Right ventricle myocardium inferior (tissue), 1 donor: ENCODE measurements at regions of chr22 and their contacts with region 1.

Region 1: GRCh38 chr22:26756675-26757293 is 99.4 kb downstream of the MIAT start:
- DNase-seq: peak; percentile 78
- ATAC-seq: peak; percentile 83

Region 2: GRCh38 chr22:26860301-26860700 is 103.5 kb after region 1 on chr22:
- intact Hi-C with region 1: no loop called
- DNase-seq: no peak
- ATAC-seq: no peak

Region 3: DNA sequence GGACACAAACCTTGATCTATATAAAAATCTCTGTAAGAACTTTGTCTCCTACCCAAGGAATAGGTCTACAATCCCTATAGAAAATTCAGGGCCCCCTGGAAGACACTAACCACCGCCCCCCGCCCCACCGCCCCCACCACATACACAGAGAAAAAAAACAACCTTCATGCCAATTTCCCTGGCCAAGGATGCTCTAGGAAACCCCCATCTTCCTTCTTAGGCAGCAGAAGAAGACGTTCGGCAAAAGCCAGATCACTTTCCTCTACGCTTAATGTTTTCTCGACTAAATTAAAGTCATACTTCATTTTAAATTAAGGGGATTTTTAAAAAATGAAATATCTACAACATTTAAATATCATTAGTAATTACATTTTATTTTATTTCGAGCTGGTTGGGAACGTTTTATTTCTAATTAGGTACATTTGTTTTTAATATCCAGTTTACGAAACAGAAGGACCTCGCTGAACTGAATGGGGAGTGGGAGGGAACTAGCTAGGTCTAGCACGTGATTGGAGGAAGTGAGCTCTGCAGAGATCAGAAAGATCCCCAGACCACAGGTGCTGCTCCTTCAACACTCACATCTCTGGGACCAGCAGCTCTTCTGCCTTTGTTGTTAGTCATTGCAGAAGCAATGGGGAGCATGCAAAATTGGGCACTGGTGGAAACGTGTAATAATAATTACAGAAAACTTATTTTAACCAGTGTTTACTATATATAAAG is 572.5 kb after region 1 on chr22:
- intact Hi-C with region 1: loop called (anchors 5 kb)
- DNase-seq: no peak
- ATAC-seq: no peak

Region 4: DNA sequence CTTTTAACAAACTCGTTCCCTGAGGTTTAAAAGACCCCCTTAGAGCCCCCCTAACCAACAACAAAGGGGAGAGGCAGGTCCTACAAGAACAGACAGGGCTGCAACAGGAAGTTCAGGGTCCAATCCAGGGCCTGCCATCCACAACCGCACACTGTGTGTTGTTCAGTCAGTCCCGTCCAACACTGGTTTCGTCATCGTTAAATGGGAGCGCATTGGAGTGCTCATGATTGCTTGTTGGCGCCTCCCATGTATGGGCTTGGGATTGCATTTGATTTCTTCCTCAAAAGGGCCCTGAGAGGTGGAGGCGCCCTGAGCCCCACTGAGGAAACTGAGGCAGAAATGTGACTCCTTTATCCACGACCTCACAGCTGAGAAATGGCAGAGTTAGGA is 870.7 kb after region 1 on chr22:
- intact Hi-C with region 1: loop called (anchors 10 kb)
- DNase-seq: no peak
- ATAC-seq: no peak

Region 5: DNA sequence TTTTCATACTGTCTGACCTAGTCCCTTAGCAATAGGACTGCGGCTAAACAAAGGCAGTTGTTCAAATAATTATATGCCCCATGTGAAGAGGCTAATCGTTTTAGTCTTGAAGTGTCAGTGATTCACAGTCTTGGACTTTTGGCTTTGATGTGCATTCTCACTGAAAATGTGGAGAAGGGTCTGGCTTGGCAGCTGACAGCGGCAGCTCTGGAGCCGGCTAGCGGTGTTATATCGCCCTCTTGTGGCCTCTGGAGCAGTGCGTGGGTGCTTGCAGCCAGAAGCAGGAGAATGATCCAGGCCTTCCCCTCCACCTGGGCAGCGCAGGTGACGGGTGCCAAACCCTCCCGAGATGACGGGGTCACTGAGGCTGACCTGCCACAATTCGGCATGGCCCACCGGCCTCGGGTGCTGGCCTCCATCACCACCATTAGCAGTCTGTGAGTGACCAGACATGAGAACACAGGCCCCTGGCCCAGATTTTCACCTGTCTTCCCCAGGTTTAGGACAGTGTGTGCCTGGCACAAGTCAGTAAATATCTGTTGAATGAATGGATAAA is 1252.6 kb after region 1 on chr22:
- intact Hi-C with region 1: loop called (anchors 10 kb)
- DNase-seq: peak; percentile 85
- ATAC-seq: peak; percentile 63